Calu3 (cell line): ENCODE measurements at regions of chr5 and their contacts with region 1.

Region 1: DNA sequence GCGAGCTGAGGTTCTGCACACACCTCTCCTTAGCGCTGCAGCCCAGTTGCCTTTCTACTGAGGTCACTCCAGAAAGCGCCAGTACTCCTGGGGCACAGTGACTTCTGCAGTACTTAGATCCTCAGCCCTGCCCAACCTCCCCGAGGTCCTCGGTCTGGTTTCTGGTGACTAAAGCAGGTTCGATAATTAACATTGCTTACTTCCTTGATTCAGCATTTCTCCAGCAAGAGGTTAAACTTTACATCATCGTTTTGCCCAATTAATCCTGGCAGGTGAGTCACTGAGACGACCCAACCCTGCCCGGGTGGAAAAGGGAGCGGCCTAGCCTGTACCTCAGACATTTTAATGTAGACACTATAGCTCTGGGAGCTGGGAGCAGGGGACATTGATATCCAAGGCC is 77.6 kb downstream of the PLAC8L1 start:
- DNase-seq: peak; percentile 88
- H3K4me3 Mint-ChIP-seq: peak overlapping the region; percentile 39
- H3K27ac Mint-ChIP-seq: peak overlapping the region; percentile 91
- H3K4me1 Mint-ChIP-seq: peaks cover 56% of the 10 kb centered on the region
- H3K27me3 Mint-ChIP-seq: no peaks in the 10 kb centered on the region
- CTCF ChIP-seq: no peak

Region 2: DNA sequence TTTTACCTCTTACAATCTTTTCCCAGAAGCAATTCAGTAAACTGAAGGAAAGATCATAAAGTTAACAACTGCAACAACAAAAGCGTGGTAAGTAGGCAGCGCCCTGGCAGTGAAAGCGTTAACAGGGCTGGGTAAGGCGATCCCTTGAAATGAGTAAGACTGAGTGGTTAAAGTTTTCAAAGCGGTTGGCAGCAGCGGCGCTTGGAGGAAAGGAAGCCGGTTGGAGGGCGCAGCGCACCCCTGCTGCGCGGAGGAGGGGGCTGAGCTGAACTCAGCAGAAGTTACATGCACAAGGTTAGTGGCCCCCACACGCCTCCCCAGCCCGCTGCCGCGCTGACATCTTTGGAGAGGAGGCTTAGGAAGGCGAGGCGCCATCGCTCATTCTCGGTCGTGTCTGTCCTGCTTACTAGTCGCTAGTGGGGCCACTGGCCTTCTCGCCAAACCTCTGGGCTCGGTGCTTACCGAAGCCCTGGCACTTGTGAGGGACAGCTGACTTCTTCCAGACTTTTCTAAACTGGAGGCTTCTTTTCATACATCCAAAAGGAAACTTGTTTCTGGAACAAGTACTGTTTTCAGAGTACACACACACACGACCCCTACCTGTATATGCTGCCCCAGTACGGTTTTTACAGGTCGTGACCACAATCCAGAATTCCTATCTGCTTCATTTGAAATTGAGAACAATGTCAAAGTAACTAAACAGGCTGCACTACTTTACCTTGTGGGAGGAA is 91.2 kb before region 1 on chr5 and contains the start of gene SH3RF2:
- CTCF ChIA-PET with region 1: no interaction called
- intact Hi-C with region 1: loop called (anchors 2 kb)
- DNase-seq: peak; percentile 76
- H3K4me3 Mint-ChIP-seq: peak within 1 kb of the TSS; percentile 76
- H3K27ac Mint-ChIP-seq: peak within 1 kb of the TSS; percentile 73
- H3K4me1 Mint-ChIP-seq: peaks cover 73% of the 10 kb centered on the region
- H3K27me3 Mint-ChIP-seq: no peaks in the 10 kb centered on the region
- CTCF ChIP-seq: no peak
- total RNA-seq, gene SH3RF2: 21.9 and 25.1 TPM in 2 replicates

Region 3: GRCh38 chr5:145987856-145988255 is 39.9 kb before region 1 on chr5:
- CTCF ChIA-PET with region 1: no interaction called
- intact Hi-C with region 1: no loop called
- DNase-seq: no peak
- H3K4me3 Mint-ChIP-seq: no peak overlapping the region
- H3K27ac Mint-ChIP-seq: no peak overlapping the region
- H3K4me1 Mint-ChIP-seq: peaks cover 17% of the 10 kb centered on the region
- H3K27me3 Mint-ChIP-seq: no peaks in the 10 kb centered on the region
- CTCF ChIP-seq: no peak

Region 4: GRCh38 chr5:146878476-146879172 is 850.9 kb after region 1 on chr5 and contains the start of gene PPP2R2B:
- CTCF ChIA-PET with region 1: no interaction called
- intact Hi-C with region 1: no loop called
- DNase-seq: peak; percentile 51
- H3K4me3 Mint-ChIP-seq: peak within 1 kb of the TSS; percentile 71
- H3K27ac Mint-ChIP-seq: no peak within 1 kb of the TSS
- H3K4me1 Mint-ChIP-seq: no peaks in the 10 kb centered on the region
- H3K27me3 Mint-ChIP-seq: peaks cover 63% of the 10 kb centered on the region
- CTCF ChIP-seq: no peak
- total RNA-seq, gene PPP2R2B: 1.2 TPM in 1 of 2 replicates, not detected in the other